ENCODE measurements at regions of chr5 and their contacts with region 1.

Region 1: DNA sequence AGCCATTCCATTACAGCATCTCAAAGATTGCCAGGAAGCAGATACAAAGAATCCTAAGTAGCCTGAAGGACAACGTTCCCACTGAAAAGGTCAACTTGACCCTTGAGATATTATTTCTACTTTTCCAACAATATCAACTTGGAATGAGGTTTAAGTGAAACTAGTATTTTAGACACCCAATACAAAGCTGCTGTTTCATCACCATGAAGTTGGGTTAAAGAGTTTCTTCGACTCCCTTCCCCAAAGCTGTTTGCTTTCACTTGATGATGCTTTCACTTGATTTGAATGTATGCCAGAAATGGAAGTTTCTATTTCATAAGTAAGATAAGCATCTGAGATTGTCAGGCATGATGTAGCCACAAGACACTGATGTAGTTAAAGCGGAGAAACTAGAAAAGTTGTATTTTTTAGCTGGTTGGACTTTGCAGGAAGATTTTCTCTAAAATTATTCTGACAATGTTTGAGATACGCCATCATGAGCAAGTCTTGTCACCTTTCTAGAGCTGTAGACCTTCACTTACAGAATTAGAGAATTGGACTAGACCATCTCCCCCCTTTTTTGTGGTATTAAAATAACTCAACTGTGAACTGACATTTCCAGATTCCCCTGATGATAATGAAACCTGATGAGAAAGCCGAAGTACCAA is 20.1 kb downstream of the MOCS2 start:
- DNase-seq: no peak
- H3K4me3 ChIP-seq: no peak overlapping the region
- H3K27ac ChIP-seq: no peak overlapping the region
- H3K4me1 ChIP-seq: peaks cover 16% of the 10 kb centered on the region
- H3K27me3 ChIP-seq: no peaks in the 10 kb centered on the region
- CTCF ChIP-seq: no peak
- POLR2A ChIP-seq: no peak

Region 2: GRCh38 chr5:53069626-53070025 is 19.8 kb before region 1 on chr5:
- CTCF ChIA-PET with region 1: interaction called, 8 read pairs
- POLR2A ChIA-PET with region 1: no interaction called
- dilution Hi-C with region 1: no loop called
- intact Hi-C with region 1: loop called (anchors 2 kb)
- DNase-seq: peak; percentile 94
- H3K4me3 ChIP-seq: no peak overlapping the region
- H3K27ac ChIP-seq: peak overlapping the region; percentile 89
- H3K4me1 ChIP-seq: peaks cover 14% of the 10 kb centered on the region
- H3K27me3 ChIP-seq: no peaks in the 10 kb centered on the region
- CTCF ChIP-seq: no peak
- POLR2A ChIP-seq: no peak

Region 3: GRCh38 chr5:53161876-53162275 is 72.4 kb after region 1 on chr5:
- CTCF ChIA-PET with region 1: no interaction called
- POLR2A ChIA-PET with region 1: no interaction called
- dilution Hi-C with region 1: no loop called
- intact Hi-C with region 1: no loop called
- DNase-seq: no peak
- H3K4me3 ChIP-seq: no peak overlapping the region
- H3K27ac ChIP-seq: no peak overlapping the region
- H3K4me1 ChIP-seq: no peaks in the 10 kb centered on the region
- H3K27me3 ChIP-seq: peaks cover 2% of the 10 kb centered on the region in 2 experiments
- CTCF ChIP-seq: no peak
- POLR2A ChIP-seq: no peak

Region 4: GRCh38 chr5:54030981-54031380 is 941.5 kb after region 1 on chr5:
- CTCF ChIA-PET with region 1: no interaction called
- POLR2A ChIA-PET with region 1: no interaction called
- dilution Hi-C with region 1: no loop called
- intact Hi-C with region 1: no loop called
- DNase-seq: no peak
- H3K4me3 ChIP-seq: no peak overlapping the region
- H3K27ac ChIP-seq: no peak overlapping the region
- H3K4me1 ChIP-seq: no peaks in the 10 kb centered on the region
- H3K27me3 ChIP-seq: no peaks in the 10 kb centered on the region
- CTCF ChIP-seq: no peak
- POLR2A ChIP-seq: no peak

Region 5: GRCh38 chr5:54329731-54330709 is 1240.6 kb after region 1 on chr5:
- CTCF ChIA-PET with region 1: no interaction called
- POLR2A ChIA-PET with region 1: no interaction called
- dilution Hi-C with region 1: no loop called
- intact Hi-C with region 1: no loop called
- DNase-seq: no peak
- H3K4me3 ChIP-seq: no peak overlapping the region
- H3K27ac ChIP-seq: no peak overlapping the region
- H3K4me1 ChIP-seq: no peaks in the 10 kb centered on the region
- H3K27me3 ChIP-seq: peaks cover 11 to 17% of the 10 kb centered on the region in 2 experiments
- CTCF ChIP-seq: no peak
- POLR2A ChIP-seq: no peak

Measured in endothelial cell of umbilical vein (primary cell).